Cardiac septum (tissue), 1 donor: ENCODE measurements at regions of chr7 and their contacts with region 1.

Region 1: DNA sequence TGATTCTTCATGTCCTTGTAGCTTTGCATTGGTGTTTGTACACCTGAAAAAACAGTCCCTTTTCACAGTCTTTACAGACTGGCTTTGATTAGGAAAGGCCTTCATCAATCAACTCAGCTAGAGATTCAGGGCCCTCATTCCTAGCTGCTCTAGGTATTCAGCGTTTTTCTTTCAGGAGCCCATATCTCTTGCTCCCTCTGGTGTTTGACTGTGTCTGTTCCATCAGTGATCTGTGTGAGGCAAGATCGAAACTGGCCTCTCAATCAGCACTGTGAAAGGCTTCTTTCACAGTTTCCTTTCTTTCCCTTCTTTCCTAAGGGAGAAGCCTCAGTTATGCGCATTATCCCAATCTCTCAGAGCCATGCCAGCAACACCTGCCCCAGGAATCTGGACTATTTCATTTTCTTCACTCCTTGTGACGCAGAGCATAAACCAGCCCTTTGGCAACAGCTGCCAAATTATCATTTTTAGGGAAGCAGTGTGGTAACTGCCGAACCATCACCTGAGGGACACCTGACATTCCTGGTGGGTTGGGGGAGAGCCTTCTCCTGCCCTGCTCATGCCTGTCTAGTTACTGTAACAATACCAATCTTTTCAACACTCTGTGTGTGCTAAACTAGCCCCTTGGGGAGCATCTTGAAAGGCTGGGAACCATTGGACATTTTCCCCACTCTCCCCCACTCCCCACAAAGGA is 75.7 kb upstream of the CCDC71L start:
- DNase-seq: no peak

Region 2: GRCh38 chr7:106187613-106188350 is 548.9 kb before region 1 on chr7:
- intact Hi-C with region 1: no loop called
- DNase-seq: no peak

Region 3: GRCh38 chr7:106448992-106449859 is 287.4 kb before region 1 on chr7:
- intact Hi-C with region 1: no loop called
- DNase-seq: peak; percentile 75

Region 4: DNA sequence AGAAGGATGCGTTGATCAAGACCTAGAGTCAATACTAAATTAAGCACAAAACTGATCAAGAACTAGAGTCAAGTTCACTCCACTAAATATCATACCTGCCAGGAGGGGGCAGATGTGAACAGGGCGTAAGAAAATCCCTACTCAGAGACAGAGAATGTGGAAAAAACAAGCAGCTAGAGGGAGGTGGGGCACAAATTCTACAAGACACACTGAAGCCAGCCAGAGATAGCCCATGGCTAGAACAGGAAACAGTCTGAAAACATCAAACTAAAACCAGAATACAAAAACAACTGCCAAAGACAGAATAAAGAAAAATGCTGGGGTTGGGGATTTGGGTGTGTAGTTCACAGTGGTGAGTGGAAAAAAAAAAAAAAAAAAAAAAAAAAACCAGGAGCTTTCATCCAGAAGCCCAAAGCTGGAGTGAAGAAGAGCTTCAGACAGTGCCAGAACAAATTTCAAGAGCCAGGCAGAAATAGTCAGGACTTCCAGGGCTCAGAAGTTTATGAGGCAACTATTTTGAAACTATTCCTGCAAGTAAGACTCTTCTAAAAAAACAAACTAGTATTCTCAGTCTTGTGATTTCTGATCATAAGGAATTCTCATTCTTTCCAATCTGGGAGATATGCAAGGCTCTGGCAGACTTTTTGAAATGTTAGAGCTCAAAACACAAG is 194.0 kb before region 1 on chr7:
- intact Hi-C with region 1: loop called (anchors 5 kb)
- DNase-seq: no peak

Region 5: GRCh38 chr7:106659963-106660861 is 76.4 kb before region 1 on chr7:
- intact Hi-C with region 1: loop called (anchors 2 kb)
- DNase-seq: peak; percentile 87

Region 6: DNA sequence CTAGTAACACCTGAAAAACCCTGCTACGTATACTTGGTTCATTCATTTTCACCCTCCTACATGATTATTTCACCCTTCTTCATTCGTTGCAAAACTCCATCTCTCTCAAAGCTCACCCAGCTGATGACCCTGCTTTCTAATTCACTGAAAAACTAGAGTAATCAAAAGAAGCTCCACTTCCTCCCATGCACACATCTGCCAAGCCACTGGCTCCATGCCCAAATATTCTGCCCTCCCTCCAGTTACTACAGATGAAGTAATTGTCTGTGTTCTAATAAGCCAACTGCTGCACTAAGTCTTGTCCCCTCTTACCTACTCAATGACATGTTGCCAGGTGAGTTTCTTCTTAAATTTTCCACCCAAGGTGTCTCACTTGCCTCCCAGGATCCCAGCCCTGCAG is 21.2 kb after region 1 on chr7:
- intact Hi-C with region 1: no loop called
- DNase-seq: no peak